Psoas muscle (tissue), 8 donors: ENCODE measurements at regions of chr7 and their contacts with region 1.

Region 1: GRCh38 chr7:105461518-105461917 is 60.6 kb downstream of the PUS7 start:
- DNase-seq: no peak
- ATAC-seq: no peak
- H3K4me3 ChIP-seq: no peak overlapping the region
- H3K27ac ChIP-seq: no peak overlapping the region
- H3K4me1 ChIP-seq: no peaks in the 10 kb centered on the region
- H3K27me3 ChIP-seq: no peaks in the 10 kb centered on the region
- CTCF ChIP-seq: no peak

Region 2: GRCh38 chr7:105448181-105448580 is 13.3 kb before region 1 on chr7:
- intact Hi-C with region 1: loop called in 1 of 2 experiments (anchors 1 kb)
- DNase-seq: no peak
- ATAC-seq: no peak
- H3K4me3 ChIP-seq: no peak overlapping the region
- H3K27ac ChIP-seq: no peak overlapping the region
- H3K4me1 ChIP-seq: no peaks in the 10 kb centered on the region
- H3K27me3 ChIP-seq: no peaks in the 10 kb centered on the region
- CTCF ChIP-seq: no peak